ENCODE measurements at regions of chr12 and their contacts with region 1.

Region 1: DNA sequence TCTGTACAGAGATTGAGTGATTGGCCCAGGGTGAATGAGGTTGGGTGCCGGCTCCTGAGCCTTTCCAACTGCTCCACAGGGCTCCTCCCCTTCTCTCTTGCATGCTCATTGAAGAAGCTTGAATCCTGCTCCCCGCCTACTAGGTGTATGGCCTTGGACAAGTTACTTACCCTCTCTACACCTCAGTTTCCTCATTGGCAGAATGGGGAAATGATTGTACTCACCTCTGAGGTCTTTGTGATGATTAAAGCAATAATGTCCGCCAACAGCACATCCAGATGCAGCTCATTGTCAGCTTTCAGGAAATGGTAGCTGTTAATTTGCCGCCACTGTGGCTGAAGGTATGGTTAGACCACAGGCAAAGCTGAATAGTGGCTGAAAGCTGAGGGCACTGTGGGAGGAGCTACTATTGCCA is 174.1 kb downstream of the CRADD start:
- DNase-seq: peak; percentile 41 to 54
- ATAC-seq: peak; percentile 55 to 70 (median 65)
- H3K4me3 ChIP-seq: no peak overlapping the region
- H3K4me3 Mint-ChIP-seq: peak overlapping the region; percentile 82
- H3K27ac ChIP-seq: peak overlapping the region; percentile 1
- H3K27ac Mint-ChIP-seq: peak overlapping the region; percentile 88
- H3K4me1 ChIP-seq: peaks cover 49% of the 10 kb centered on the region
- H3K4me1 Mint-ChIP-seq: peaks cover 62 to 71% of the 10 kb centered on the region in 2 donors
- H3K27me3 ChIP-seq: no peaks in the 10 kb centered on the region
- H3K27me3 Mint-ChIP-seq: peaks cover 0 to 3% of the 10 kb centered on the region in 2 donors
- CTCF ChIP-seq: no peak

Region 2: GRCh38 chr12:93569656-93570551 is 281.4 kb before region 1 on chr12:
- intact Hi-C with region 1: loop called (anchors 1 kb)
- DNase-seq: peak; percentile 66 to 85
- ATAC-seq: peak; percentile 40 to 63 (median 46)
- H3K4me3 ChIP-seq: peak overlapping the region; percentile 95
- H3K4me3 Mint-ChIP-seq: peak overlapping the region; percentile 95
- H3K27ac ChIP-seq: peak overlapping the region; percentile 80
- H3K27ac Mint-ChIP-seq: peak overlapping the region; percentile 86 to 89
- H3K4me1 ChIP-seq: peaks cover 26% of the 10 kb centered on the region
- H3K4me1 Mint-ChIP-seq: peaks cover 31 to 38% of the 10 kb centered on the region in 2 donors
- H3K27me3 ChIP-seq: peaks cover 5% of the 10 kb centered on the region
- H3K27me3 Mint-ChIP-seq: peaks cover 0 to 4% of the 10 kb centered on the region in 2 donors
- CTCF ChIP-seq: peak; percentile 72

Region 3: DNA sequence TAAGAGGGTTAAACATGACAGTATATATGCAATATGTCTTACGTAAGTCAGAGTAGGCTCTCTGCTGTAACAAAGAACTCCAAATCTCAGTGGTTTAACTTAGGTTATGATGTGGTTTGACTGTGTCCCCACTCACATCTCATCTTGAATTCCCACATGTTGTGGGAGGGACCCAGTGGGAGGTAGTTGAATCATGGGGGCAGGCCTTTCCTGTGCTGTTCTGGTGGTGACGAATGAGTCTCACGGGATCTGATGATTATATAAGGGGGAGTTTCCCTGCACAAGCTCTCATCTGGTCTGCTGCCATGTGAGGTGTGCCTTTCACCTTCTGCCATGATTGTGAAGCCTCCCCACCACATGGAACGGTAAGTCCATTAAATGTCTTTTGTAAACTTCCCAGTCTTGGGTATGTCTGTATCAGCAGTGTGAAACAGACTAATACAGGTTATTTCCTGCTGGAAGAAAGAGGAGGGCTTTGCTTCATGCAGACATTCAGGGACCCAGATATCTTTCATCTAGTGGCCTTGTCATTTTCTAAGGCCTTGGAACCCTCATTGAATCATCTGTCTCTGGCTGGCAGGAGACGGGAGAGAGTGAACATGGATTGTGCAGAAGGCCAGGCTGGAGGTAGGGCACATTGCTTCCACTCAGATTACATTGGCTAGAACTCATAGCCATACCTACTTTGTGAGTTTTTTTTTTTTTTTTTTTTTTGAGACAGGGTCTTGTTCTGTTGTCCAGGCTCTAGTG is 78.0 kb before region 1 on chr12:
- intact Hi-C with region 1: loop called (anchors 2 kb)
- DNase-seq: peak; percentile 50 to 60
- ATAC-seq: peak; percentile 78 to 85 (median 84)
- H3K4me3 ChIP-seq: no peak overlapping the region
- H3K4me3 Mint-ChIP-seq: peak overlapping the region; percentile 52
- H3K27ac ChIP-seq: peak overlapping the region; percentile 56
- H3K27ac Mint-ChIP-seq: peak overlapping the region; percentile 88 to 89
- H3K4me1 ChIP-seq: peaks cover 4% of the 10 kb centered on the region
- H3K4me1 Mint-ChIP-seq: peaks cover 45 to 61% of the 10 kb centered on the region in 2 donors
- H3K27me3 ChIP-seq: no peaks in the 10 kb centered on the region
- H3K27me3 Mint-ChIP-seq: no peaks in the 10 kb centered on the region
- CTCF ChIP-seq: no peak

Region 4: GRCh38 chr12:95318071-95318545 is 1466.8 kb after region 1 on chr12:
- intact Hi-C with region 1: no loop called
- DNase-seq: no peak
- ATAC-seq: no peak
- H3K4me3 ChIP-seq: no peak overlapping the region
- H3K4me3 Mint-ChIP-seq: no peak overlapping the region
- H3K27ac ChIP-seq: no peak overlapping the region
- H3K27ac Mint-ChIP-seq: no peak overlapping the region
- H3K4me1 ChIP-seq: no peaks in the 10 kb centered on the region
- H3K4me1 Mint-ChIP-seq: no peaks in the 10 kb centered on the region
- H3K27me3 ChIP-seq: no peaks in the 10 kb centered on the region
- H3K27me3 Mint-ChIP-seq: peaks cover 7 to 10% of the 10 kb centered on the region in 2 donors
- CTCF ChIP-seq: no peak